ENCODE measurements at regions of chr17 and their contacts with region 1.

Region 1: DNA sequence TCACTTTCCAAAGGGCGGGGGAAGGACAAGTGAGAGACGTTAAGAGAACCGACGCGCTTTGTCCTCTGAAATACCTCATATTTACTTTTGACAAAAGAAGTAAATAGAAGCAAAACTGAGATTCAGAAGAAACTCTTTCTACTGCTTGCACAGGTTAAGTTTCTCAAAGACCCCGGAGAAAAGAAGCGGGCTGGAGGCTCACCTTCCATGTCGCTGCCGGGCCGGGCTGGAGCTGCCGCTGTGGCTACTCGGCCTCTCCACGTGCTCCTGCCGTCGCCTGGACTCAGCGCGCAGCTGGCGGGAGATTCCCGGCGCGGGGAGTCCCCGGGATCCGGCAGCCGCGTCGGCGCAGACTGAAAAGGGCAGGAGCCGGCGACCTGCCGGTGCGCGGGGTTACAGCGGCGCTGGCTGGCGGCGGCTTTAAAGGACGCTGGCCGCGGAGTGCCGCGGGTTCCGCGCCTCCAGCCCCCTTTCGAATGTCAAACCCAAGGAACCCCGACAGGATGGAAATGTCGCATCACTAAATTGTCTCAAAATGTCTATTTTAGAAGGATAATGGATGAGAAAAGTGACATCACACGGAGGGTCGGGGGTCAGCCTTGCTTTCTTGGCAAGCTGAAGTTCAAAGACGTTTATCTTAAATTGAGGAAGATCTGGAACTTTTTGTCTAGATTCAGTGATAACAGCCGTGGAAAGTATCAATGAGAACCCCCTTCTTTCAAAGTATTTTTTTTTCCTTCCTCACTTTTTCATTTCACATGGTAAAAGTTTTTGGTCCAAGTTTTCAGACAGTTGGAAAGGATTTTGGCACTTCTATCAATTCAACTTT is at the start of gene IKZF3:
- DNase-seq: peak; percentile 70
- H3K4me3 Mint-ChIP-seq: peak within 1 kb of the TSS; percentile 89
- H3K27ac Mint-ChIP-seq: peak within 1 kb of the TSS; percentile 82
- H3K4me1 Mint-ChIP-seq: peaks cover 60% of the 10 kb centered on the region
- H3K27me3 Mint-ChIP-seq: no peaks in the 10 kb centered on the region
- total RNA-seq, gene IKZF3: 18.3 and 20.3 TPM in 2 replicates

Region 2: DNA sequence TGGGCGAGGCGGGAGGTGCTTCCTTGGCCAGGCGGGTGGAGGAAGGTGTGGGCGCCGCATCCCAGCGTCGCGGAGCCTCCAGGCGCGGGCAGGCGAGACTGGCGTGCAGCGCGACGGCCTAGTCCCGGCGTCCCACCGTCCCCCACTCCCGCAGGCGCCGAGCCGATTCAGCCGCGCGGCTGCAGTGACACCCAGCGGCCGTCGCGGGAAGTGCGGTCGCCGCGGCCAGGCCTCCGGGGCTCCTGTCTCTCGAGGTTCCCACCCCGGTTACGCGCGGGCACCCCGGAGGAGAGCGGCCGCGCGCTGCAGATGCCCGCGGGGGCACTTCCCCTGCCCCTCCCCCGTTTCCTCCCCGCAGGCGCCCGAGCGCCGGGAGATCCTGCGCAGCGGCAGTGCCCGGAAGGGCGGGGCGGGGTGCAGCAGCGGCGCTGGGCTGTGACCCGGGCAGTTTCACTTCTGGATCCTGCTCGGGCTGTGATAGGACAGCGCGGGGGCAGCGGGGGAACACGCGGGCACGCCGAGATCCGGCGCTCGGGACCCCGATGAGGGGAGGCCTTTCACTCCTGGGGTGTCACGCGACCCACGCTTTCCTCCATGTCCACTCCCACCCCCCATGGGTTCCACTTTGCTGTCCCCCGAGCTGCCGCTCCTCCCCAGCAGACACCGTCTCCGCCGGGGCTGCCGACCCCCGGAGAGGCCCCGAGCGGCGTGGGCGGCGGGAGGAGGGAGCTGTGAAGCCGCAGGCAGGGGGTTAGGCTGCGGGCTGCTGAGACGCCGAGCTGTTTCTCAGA is 109.8 kb before region 1 on chr17:
- intact Hi-C with region 1: loop called (anchors 1 kb)
- DNase-seq: peak; percentile 98
- H3K4me3 Mint-ChIP-seq: peak overlapping the region; percentile 19
- H3K27ac Mint-ChIP-seq: peak overlapping the region; percentile 56
- H3K4me1 Mint-ChIP-seq: peaks cover 52% of the 10 kb centered on the region
- H3K27me3 Mint-ChIP-seq: no peaks in the 10 kb centered on the region

Region 3: GRCh38 chr17:39769974-39770587 is 94.1 kb before region 1 on chr17:
- intact Hi-C with region 1: loop called (anchors 1 kb)
- DNase-seq: peak; percentile 63
- H3K4me3 Mint-ChIP-seq: no peak overlapping the region
- H3K27ac Mint-ChIP-seq: peak overlapping the region; percentile 57
- H3K4me1 Mint-ChIP-seq: peaks cover 78% of the 10 kb centered on the region
- H3K27me3 Mint-ChIP-seq: no peaks in the 10 kb centered on the region

Region 4: DNA sequence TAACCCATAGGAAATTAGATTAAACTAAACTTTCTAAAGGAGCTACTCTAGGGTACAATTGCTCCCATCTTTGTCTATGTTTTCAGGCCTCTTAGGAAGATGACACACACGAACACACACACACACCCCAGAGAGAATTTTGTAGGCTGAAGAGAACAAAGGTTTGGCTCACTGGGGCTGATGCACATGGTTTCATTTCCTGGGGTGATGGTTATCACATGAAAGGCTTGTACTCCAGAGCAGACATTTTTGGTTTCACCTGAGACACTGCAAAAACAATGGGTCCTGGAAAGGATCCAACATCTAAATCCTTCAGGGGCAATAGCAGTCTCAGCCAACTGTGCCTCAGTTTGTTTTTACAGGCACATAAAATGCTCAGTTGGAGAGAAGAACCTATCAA is 63.6 kb before region 1 on chr17:
- intact Hi-C with region 1: loop called (anchors 2 kb)
- DNase-seq: peak; percentile 49
- H3K4me3 Mint-ChIP-seq: no peak overlapping the region
- H3K27ac Mint-ChIP-seq: peak overlapping the region; percentile 82
- H3K4me1 Mint-ChIP-seq: peaks cover 45% of the 10 kb centered on the region
- H3K27me3 Mint-ChIP-seq: no peaks in the 10 kb centered on the region

Region 5: GRCh38 chr17:39813631-39814030 is 50.5 kb before region 1 on chr17:
- intact Hi-C with region 1: loop called (anchors 5 kb)
- DNase-seq: peak; percentile 60
- H3K4me3 Mint-ChIP-seq: peak overlapping the region; percentile 62
- H3K27ac Mint-ChIP-seq: peak overlapping the region; percentile 78
- H3K4me1 Mint-ChIP-seq: peaks cover 49% of the 10 kb centered on the region
- H3K27me3 Mint-ChIP-seq: no peaks in the 10 kb centered on the region

Region 6: DNA sequence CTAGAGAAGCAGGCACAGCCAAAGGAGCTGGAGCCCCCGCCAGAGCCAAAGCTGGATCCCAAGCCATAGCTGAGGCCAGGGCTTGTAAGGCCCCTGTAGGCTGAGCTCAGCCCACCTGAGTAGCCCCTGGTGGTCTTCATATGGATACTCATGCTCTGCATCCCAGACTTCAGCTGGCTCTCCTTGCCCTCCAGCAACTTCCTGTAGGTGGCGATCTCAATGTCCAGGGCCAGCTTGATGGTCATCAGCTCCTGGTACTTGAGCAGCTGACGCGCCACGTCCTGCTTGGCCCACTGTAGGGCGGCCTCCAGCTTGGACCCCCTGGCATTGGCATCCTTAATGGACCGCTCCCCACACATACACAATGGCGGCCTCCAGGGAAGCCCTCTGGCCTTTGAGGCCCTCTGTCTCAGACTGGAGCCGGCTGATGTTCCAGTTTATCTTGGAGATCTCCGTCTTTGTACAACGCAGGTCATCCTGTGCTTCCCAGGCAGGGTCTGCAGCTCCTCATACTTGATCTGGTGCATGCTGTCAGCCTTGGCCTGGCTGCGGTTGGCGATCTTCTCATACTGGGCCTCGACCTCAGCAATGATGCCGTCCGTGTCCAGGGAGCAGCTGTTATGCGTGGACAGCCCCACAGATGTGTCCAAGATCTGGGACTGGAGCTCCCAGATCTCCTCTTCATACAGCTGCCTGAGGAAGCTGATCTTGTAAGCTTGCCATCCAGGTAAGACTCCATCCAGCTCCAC is 28.9 kb before region 1 on chr17:
- intact Hi-C with region 1: no loop called
- DNase-seq: no peak
- H3K4me3 Mint-ChIP-seq: no peak overlapping the region
- H3K27ac Mint-ChIP-seq: no peak overlapping the region
- H3K4me1 Mint-ChIP-seq: peaks cover 2% of the 10 kb centered on the region
- H3K27me3 Mint-ChIP-seq: no peaks in the 10 kb centered on the region

Region 7: GRCh38 chr17:39845052-39845846 is 18.9 kb before region 1 on chr17:
- intact Hi-C with region 1: no loop called
- DNase-seq: no peak
- H3K4me3 Mint-ChIP-seq: no peak overlapping the region
- H3K27ac Mint-ChIP-seq: no peak overlapping the region
- H3K4me1 Mint-ChIP-seq: peaks cover 55% of the 10 kb centered on the region
- H3K27me3 Mint-ChIP-seq: no peaks in the 10 kb centered on the region

Region 8: GRCh38 chr17:39894681-39895376 is 30.7 kb after region 1 on chr17:
- intact Hi-C with region 1: no loop called
- DNase-seq: no peak
- H3K4me3 Mint-ChIP-seq: no peak overlapping the region
- H3K27ac Mint-ChIP-seq: peak overlapping the region; percentile 68
- H3K4me1 Mint-ChIP-seq: peaks cover 13% of the 10 kb centered on the region
- H3K27me3 Mint-ChIP-seq: peaks cover 3% of the 10 kb centered on the region

Region 9: GRCh38 chr17:39927101-39927928 is 63.2 kb after region 1 on chr17 and contains the starts of genes LRRC3C and ORMDL3:
- intact Hi-C with region 1: loop called (anchors 5 kb)
- DNase-seq: peak; percentile 89
- H3K4me3 Mint-ChIP-seq: peak within 1 kb of the TSS; percentile 86
- H3K27ac Mint-ChIP-seq: peak within 1 kb of the TSS; percentile 89
- H3K4me1 Mint-ChIP-seq: peaks cover 41% of the 10 kb centered on the region
- H3K27me3 Mint-ChIP-seq: no peaks in the 10 kb centered on the region
- total RNA-seq, gene LRRC3C: not detected in 2 replicates
- total RNA-seq, gene ORMDL3: 66.1 and 74.3 TPM in 2 replicates

Region 10: GRCh38 chr17:39939588-39940419 is 75.7 kb after region 1 on chr17:
- intact Hi-C with region 1: no loop called
- DNase-seq: peak; percentile 50
- H3K4me3 Mint-ChIP-seq: peak overlapping the region; percentile 38
- H3K27ac Mint-ChIP-seq: peak overlapping the region; percentile 80
- H3K4me1 Mint-ChIP-seq: peaks cover 22% of the 10 kb centered on the region
- H3K27me3 Mint-ChIP-seq: no peaks in the 10 kb centered on the region

Measured in activated T-helper 2 cell treated with anti-CD3 and anti-CD28 coated beads, Interferon-gamma antibody, Interleukin-2, Interleukin-4, amounts not matched to agents 10 μg/mL and 5 μg/mL and 100 μg/mL, durations not matched to agents 14 hours and 24 hours and 36 hours (primary cell).